Breast epithelium (tissue), 4 donors: ENCODE measurements at regions of chr12 and their contacts with region 1.

Region 1: GRCh38 chr12:131621701-131622421 is 89.0 kb upstream of the SFSWAP start:
- DNase-seq: no peak
- H3K4me3 ChIP-seq: no peak overlapping the region
- H3K27ac ChIP-seq: no peak overlapping the region
- H3K4me1 ChIP-seq: no peaks in the 10 kb centered on the region
- H3K27me3 ChIP-seq: peaks cover 0 to 54% of the 10 kb centered on the region in 2 donors
- CTCF ChIP-seq: no peak
- POLR2A ChIP-seq: no peak

Region 2: DNA sequence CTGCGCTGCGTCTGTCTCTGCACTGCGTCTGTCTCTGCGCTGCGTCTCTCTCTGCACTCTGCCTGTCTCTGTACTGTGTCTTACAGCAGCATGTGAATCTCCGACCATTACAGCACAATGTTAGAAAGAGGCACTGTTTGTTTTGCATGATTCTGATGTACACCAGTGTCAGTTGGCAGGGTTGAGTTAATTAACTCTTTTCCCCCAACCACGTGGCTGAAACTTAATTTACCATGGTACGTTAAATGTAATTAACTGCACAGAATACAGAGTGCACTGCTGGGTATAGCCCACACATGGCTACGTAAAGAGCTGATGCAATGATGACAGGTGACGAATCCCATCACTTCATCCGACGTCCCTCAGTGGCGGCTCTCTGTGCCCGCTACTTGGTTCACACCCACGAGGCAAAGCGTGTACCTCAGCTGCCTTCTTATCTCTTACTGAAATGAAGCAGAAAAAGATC is 38.6 kb before region 1 on chr12:
- intact Hi-C with region 1: no loop called
- DNase-seq: no peak
- H3K4me3 ChIP-seq: no peak overlapping the region
- H3K27ac ChIP-seq: no peak overlapping the region
- H3K4me1 ChIP-seq: no peaks in the 10 kb centered on the region
- H3K27me3 ChIP-seq: peaks cover 0 to 22% of the 10 kb centered on the region in 2 donors
- CTCF ChIP-seq: no peak
- POLR2A ChIP-seq: no peak

Region 3: GRCh38 chr12:131673888-131674257 is 52.0 kb after region 1 on chr12:
- intact Hi-C with region 1: no loop called
- DNase-seq: no peak
- H3K4me3 ChIP-seq: no peak overlapping the region
- H3K27ac ChIP-seq: no peak overlapping the region
- H3K4me1 ChIP-seq: no peaks in the 10 kb centered on the region
- H3K27me3 ChIP-seq: peaks cover 0 to 20% of the 10 kb centered on the region in 2 donors
- CTCF ChIP-seq: no peak
- POLR2A ChIP-seq: no peak

Region 4: DNA sequence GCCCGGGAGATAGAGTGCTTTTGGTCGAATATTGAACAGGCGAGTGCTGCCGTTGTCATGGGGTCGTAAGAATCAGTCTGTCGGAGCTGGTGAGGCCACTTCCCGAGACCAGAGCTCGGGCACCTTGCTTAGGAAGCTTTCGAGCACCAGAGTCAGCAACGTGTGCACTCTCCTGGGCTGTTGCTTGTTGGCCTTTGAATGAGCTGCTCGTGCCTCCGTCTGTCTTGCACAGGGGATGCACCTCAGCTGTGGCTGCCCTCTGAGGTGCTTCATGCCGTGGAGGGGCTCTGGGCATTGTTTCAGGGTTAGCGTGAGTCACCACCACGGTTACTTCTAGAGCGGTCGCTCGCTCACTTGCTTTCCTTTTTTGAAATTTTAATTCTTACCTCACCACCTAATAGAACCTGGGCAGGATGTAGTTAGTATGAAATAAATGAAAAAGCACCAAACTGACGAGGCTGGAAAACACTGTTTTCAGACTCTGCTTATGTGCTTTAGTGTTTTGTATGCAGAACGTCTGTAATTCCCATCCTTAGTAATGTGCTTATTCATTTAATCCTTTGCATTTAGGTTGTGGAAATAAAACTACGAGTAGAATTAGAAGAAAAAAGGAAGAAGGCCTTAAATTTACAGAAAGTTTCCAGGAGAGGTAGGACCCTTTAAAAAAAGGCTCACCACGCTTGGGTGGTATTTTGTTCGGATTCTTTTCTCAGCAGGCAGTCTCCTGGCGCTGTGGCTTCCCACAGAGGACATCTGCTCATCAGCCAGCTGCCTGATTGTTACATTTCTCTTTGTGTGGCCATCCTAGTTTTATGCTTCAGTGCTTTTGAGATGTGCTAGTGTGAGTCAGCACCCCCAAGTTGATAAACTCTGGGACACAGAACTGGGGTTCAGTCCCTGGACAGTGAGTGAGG is 368.5 kb after region 1 on chr12:
- intact Hi-C with region 1: loop called (anchors 5 kb)
- DNase-seq: no peak
- H3K4me3 ChIP-seq: no peak overlapping the region
- H3K27ac ChIP-seq: no peak overlapping the region
- H3K4me1 ChIP-seq: no peaks in the 10 kb centered on the region
- H3K27me3 ChIP-seq: no peaks in the 10 kb centered on the region
- CTCF ChIP-seq: no peak
- POLR2A ChIP-seq: no peak